ENCODE measurements at regions of chr14 and their contacts with region 1.

Region 1: GRCh38 chr14:77314043-77314442 is 6.6 kb downstream of the POMT2 start:
- DNase-seq: no peak
- H3K4me3 ChIP-seq: no peak overlapping the region
- H3K27ac ChIP-seq: no peak overlapping the region
- H3K4me1 ChIP-seq: peaks cover 8% of the 10 kb centered on the region
- H3K27me3 ChIP-seq: no peaks in the 10 kb centered on the region
- CTCF ChIP-seq: no peak

Region 2: DNA sequence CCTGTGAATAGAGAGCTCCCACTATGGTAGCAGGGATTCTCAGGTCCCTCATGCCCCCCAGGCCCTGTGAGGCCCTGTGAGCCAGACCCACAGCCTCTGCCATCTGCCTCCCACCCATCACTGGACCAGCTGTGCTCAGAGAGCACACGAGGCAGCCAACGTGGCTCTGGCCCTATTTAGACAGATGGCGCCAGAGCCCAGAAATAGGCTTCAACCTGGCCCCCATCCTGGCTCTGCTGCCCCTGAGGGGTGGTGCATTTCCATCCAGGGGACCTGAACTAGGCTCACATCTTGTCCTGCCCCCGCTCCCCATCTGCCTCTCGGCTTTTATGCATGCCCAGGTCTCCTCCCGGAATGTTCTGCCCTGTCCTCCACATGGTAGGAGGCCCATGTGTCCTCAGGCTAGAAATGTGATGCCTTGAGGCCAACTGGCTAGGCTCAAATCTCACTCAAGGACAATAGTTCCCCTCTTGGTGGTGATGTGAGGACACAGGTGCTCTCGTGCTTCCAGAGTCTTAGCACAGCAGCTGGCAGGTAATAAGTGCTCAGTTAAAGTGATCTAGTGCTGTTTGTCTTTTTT is 113.5 kb before region 1 on chr14:
- CTCF ChIA-PET with region 1: no interaction called
- POLR2A ChIA-PET with region 1: no interaction called
- intact Hi-C with region 1: no loop called
- DNase-seq: no peak
- H3K4me3 ChIP-seq: no peak overlapping the region
- H3K27ac ChIP-seq: no peak overlapping the region
- H3K4me1 ChIP-seq: no peaks in the 10 kb centered on the region
- H3K27me3 ChIP-seq: peaks cover 23% of the 10 kb centered on the region
- CTCF ChIP-seq: no peak

Region 3: GRCh38 chr14:77301103-77301502 is 12.9 kb before region 1 on chr14:
- CTCF ChIA-PET with region 1: interaction called, 15 read pairs
- POLR2A ChIA-PET with region 1: no interaction called
- intact Hi-C with region 1: no loop called
- DNase-seq: peak; percentile 78
- H3K4me3 ChIP-seq: no peak overlapping the region
- H3K27ac ChIP-seq: no peak overlapping the region
- H3K4me1 ChIP-seq: no peaks in the 10 kb centered on the region
- H3K27me3 ChIP-seq: no peaks in the 10 kb centered on the region
- CTCF ChIP-seq: peak; percentile 81

Region 4: GRCh38 chr14:78302841-78303240 is 988.8 kb after region 1 on chr14:
- CTCF ChIA-PET with region 1: interaction called, 10 read pairs
- POLR2A ChIA-PET with region 1: no interaction called
- intact Hi-C with region 1: no loop called
- DNase-seq: no peak
- H3K4me3 ChIP-seq: no peak overlapping the region
- H3K27ac ChIP-seq: no peak overlapping the region
- H3K4me1 ChIP-seq: no peaks in the 10 kb centered on the region
- H3K27me3 ChIP-seq: peaks cover 27% of the 10 kb centered on the region
- CTCF ChIP-seq: no peak

Region 5: DNA sequence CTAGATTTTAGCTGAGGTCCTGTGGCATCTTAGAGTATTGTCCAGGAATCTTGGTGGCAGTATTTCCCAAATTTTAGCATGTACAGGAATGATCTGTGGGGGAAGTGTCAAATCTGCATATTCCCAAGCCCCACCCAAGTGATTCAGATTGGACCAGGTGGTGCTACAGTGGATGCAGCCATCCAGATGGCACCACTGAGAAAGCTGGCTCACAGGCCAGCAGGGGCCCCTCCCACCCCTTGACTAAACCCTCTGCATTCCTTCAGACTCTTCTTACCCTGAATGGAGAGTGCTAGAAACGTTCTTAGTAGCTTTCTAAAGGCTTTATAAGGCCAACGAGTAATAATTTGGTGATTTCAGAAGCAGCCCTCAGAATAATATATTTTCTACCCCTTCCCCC is 1111.3 kb after region 1 on chr14:
- CTCF ChIA-PET with region 1: interaction called, 18 read pairs
- POLR2A ChIA-PET with region 1: no interaction called
- intact Hi-C with region 1: no loop called
- DNase-seq: no peak
- H3K4me3 ChIP-seq: no peak overlapping the region
- H3K27ac ChIP-seq: no peak overlapping the region
- H3K4me1 ChIP-seq: no peaks in the 10 kb centered on the region
- H3K27me3 ChIP-seq: no peaks in the 10 kb centered on the region
- CTCF ChIP-seq: no peak